CD4-positive, alpha-beta T cell (primary cell): ENCODE measurements at regions of chr7 and their contacts with region 1.

Region 1: DNA sequence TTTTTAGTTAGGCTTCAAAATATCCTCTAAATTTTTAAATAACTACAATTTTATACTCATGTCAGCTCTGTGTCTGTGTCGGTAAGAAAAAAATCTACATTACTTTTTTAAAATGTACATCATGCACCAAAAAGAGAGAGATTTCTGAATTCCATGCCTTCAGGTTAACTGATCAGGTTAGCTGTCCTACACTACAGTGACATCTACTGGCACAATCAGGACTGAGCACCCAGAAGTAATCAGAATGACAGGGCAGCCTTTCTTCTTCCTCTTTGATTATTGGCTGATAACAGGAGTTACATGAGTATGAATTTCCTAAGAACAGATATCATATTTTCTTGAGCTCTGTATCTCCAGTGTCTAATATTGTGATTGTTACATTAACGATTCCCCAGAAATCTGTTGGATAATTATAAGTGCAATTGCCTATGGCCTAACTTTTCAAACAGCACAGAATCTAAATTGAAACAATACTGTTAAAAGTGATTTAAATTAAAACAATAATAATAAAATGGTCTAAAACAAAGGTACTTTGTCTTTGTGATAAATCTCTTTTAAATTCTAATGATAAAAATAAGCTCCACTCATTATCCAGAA is 41.8 kb upstream of the HYCC1 start:
- DNase-seq: peak in 13 of 14 experiments; percentile 17 to 83 (median 37)
- ATAC-seq: peak; percentile 99
- H3K4me3 ChIP-seq: no peak overlapping the region
- H3K4me3 Mint-ChIP-seq: no peak overlapping the region
- H3K27ac ChIP-seq: no peak overlapping the region
- H3K27ac Mint-ChIP-seq: no peak overlapping the region
- H3K4me1 ChIP-seq: no peaks in the 10 kb centered on the region
- H3K4me1 Mint-ChIP-seq: no peaks in the 10 kb centered on the region
- H3K27me3 ChIP-seq: no peaks in the 10 kb centered on the region
- H3K27me3 Mint-ChIP-seq: no peaks in the 10 kb centered on the region
- CTCF ChIP-seq: peak; percentile 96

Region 2: GRCh38 chr7:22559829-22560489 is 495.7 kb before region 1 on chr7:
- CTCF ChIA-PET with region 1: interaction called, 31 read pairs
- POLR2A ChIA-PET with region 1: no interaction called
- intact Hi-C with region 1: loop called (anchors 1 kb)
- DNase-seq: peak; percentile 40 to 83 (median 56)
- ATAC-seq: peak; percentile 96
- H3K4me3 ChIP-seq: no peak overlapping the region
- H3K4me3 Mint-ChIP-seq: no peak overlapping the region
- H3K27ac ChIP-seq: no peak overlapping the region
- H3K27ac Mint-ChIP-seq: no peak overlapping the region
- H3K4me1 ChIP-seq: peaks cover 21% of the 10 kb centered on the region
- H3K4me1 Mint-ChIP-seq: peaks cover 28% of the 10 kb centered on the region
- H3K27me3 ChIP-seq: peaks cover 3 to 5% of the 10 kb centered on the region in 2 experiments
- H3K27me3 Mint-ChIP-seq: peaks cover 21% of the 10 kb centered on the region
- CTCF ChIP-seq: peak; percentile 73

Region 3: DNA sequence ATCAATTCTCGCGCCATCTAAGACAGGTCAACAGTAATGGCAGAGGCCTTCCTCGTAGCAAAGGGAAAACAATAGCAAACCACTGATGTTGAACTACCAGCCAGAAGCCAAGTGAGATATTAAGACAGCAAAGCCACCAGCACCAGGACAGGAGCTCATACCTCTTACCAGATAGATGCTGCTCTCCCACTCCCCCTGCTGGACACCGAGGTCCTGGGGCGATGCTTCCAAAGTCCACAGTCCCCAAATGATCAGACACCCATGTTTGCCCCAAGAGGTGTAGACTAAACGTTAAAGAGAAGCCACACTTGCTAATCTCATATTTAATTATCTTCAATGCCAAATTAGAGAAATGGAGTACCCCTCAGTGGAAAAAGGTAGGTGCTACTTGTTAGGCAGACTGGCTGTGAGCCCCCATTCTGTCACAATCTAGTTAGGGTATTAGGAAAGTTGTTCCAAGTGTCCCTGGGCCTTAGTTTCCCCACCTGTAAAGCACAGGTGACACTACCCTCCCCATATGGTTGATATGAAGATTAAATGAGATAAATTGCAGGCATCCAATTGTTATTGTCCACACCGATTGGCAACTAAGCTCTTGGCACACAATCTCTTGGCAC is 273.0 kb before region 1 on chr7:
- CTCF ChIA-PET with region 1: interaction called, 6 read pairs
- POLR2A ChIA-PET with region 1: no interaction called
- intact Hi-C with region 1: loop called (anchors 1 to 2 kb)
- DNase-seq: peak; percentile 48 to 80 (median 64)
- ATAC-seq: peak; percentile 71
- H3K4me3 ChIP-seq: no peak overlapping the region
- H3K4me3 Mint-ChIP-seq: no peak overlapping the region
- H3K27ac ChIP-seq: no peak overlapping the region
- H3K27ac Mint-ChIP-seq: no peak overlapping the region
- H3K4me1 ChIP-seq: no peaks in the 10 kb centered on the region
- H3K4me1 Mint-ChIP-seq: no peaks in the 10 kb centered on the region
- H3K27me3 ChIP-seq: no peaks in the 10 kb centered on the region
- H3K27me3 Mint-ChIP-seq: no peaks in the 10 kb centered on the region
- CTCF ChIP-seq: peak; percentile 69

Region 4: GRCh38 chr7:22854158-22855048 is 201.3 kb before region 1 on chr7:
- CTCF ChIA-PET with region 1: interaction called, 5 read pairs
- POLR2A ChIA-PET with region 1: no interaction called
- intact Hi-C with region 1: loop called (anchors 1 kb)
- DNase-seq: peak; percentile 30 to 90 (median 68)
- ATAC-seq: peak; percentile 21
- H3K4me3 ChIP-seq: peak overlapping the region; percentile 97
- H3K4me3 Mint-ChIP-seq: peak overlapping the region; percentile 97
- H3K27ac ChIP-seq: peak overlapping the region; percentile 69 to 75
- H3K27ac Mint-ChIP-seq: peak overlapping the region; percentile 92
- H3K4me1 ChIP-seq: peaks cover 21% of the 10 kb centered on the region
- H3K4me1 Mint-ChIP-seq: peaks cover 30% of the 10 kb centered on the region
- H3K27me3 ChIP-seq: no peaks in the 10 kb centered on the region
- H3K27me3 Mint-ChIP-seq: peaks cover 3% of the 10 kb centered on the region
- CTCF ChIP-seq: peak; percentile 71